Posterior vena cava (tissue), 2 donors: ENCODE measurements at regions of chr4 and their contacts with region 1.

Region 1: DNA sequence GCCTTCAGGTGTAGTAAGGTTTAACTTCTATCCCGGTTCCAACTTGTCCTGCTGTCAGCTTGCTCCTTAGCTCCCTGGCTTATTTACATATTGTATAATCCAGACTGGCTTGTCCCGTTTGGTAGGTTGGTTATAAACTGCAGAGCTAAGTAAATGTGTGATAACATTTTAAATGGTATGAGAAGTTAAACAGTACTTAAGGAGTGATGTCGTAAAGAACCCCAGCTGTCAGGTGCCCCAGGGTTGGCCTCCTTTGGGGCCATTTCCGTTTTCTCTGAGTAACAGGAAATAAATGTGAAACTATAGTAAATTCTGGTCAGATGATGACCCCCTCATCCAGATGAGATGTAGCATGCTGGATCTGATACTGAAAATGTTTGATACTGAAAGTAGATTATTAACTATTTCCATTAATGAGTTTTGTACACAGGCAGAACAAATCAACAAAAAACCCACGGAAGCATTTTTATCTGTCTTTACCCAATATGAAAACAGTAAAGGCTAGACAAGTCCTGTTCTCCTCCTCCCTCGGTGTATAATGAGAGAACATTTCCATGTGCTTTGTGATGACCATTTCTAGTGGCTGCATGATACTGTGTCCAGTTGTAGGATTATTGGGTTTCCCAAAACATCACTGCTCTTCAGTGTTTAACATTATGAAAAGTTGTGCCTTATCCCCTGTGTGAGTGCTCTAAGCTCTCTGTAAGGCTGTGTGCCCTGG is 22.4 kb downstream of the GAB1 start:
- DNase-seq: no peak

Region 2: GRCh38 chr4:142539796-142540482 is 819.1 kb before region 1 on chr4:
- intact Hi-C with region 1: no loop called
- DNase-seq: no peak

Region 3: DNA sequence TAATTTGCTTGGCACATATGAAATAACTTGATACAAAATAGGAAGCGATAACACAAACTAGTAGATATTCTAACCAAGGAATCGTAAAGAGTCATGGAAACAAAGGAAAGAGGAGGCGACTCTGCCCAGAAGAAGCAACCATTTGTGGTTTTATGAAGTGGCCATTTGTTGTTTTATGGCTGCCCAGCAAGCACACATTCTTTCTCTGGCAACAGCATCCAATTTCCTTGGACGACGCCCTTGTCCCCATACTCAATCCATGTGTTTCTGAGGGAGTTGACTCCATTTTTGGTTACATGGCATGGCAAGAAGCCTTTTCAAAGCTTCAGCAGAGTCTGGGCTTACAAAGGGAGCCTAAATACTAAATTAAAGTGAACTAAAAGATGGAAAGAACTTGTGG is 808.1 kb before region 1 on chr4:
- intact Hi-C with region 1: no loop called
- DNase-seq: no peak

Region 4: GRCh38 chr4:143406523-143406922 is 47.4 kb after region 1 on chr4:
- intact Hi-C with region 1: loop called in 1 of 2 experiments (anchors 10 kb)
- DNase-seq: peak; percentile 85

Region 5: GRCh38 chr4:143473334-143474126 is 114.4 kb after region 1 on chr4:
- intact Hi-C with region 1: no loop called
- DNase-seq: no peak